HepG2 (cell line): ENCODE measurements at regions of chr3 and their contacts with region 1.

Region 1: GRCh38 chr3:49339945-49340800 is at the start of gene USP4:
- DNase-seq: peak; percentile 89
- ATAC-seq: peak; percentile 92
- H3K4me3 ChIP-seq: peak within 1 kb of the TSS; percentile 76 to 90 (median 82)
- H3K27ac ChIP-seq: peak within 1 kb of the TSS; percentile 93
- H3K4me1 ChIP-seq: peaks cover 44% of the 10 kb centered on the region
- H3K27me3 ChIP-seq: no peaks in the 10 kb centered on the region
- CTCF ChIP-seq: peak; percentile 84
- EP300 ChIP-seq: peak in 1 of 2 experiments; percentile 16; a peak in 1 of 4 replicates
- POLR2A ChIP-seq: peak; percentile 63 to 78
- RAD21 ChIP-seq: peak; percentile 79
- total RNA-seq, gene USP4: 9.2 and 12.1 TPM in 2 replicates

Region 2: DNA sequence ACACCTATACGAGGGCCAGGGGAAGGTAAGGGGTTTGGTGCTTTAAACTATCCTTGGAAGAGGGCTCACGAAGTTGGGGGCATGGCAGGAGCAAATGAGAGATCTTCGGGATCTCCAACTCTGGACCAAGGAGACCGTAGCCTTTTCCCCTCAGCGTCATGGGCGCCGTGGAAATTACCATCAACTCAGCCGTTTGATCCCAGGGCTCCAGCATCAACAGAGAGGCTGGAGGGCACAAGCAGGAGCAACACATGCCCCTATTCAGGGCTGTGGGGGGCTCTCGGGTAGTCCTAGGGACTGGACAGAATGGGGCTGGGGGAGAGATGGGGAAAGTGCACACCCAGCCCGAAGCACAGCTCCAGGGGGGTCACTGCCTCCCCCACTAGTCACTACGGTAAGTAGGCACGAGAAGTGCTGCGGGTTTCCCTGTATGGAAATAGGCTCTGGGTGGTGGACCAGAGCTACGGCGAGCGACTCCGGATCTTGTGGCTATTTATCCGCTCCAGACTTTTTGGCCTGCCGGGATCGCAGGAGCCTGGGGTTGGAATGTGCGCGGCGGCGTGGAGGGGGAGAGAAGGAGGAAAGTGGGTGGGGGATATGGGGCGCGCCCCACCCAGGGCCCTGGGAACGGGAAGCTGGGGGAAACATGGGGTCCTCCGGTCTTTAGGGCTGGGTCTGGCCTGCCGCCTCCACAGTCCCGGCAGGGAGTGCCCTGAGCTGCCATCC is 206.8 kb before region 1 on chr3:
- CTCF ChIA-PET with region 1: no interaction called
- POLR2A ChIA-PET with region 1: interaction called, 12 read pairs
- in situ Hi-C with region 1: no loop called
- intact Hi-C with region 1: no loop called
- DNase-seq: peak; percentile 80
- ATAC-seq: peak; percentile 60
- H3K4me3 ChIP-seq: peak overlapping the region; percentile 72 to 78 (median 77)
- H3K27ac ChIP-seq: peak overlapping the region; percentile 80
- H3K4me1 ChIP-seq: peaks cover 39% of the 10 kb centered on the region
- H3K27me3 ChIP-seq: no peaks in the 10 kb centered on the region
- CTCF ChIP-seq: peak; percentile 35
- EP300 ChIP-seq: no peak
- POLR2A ChIP-seq: peak in 1 of 2 experiments; percentile 31; a peak in 1 of 4 replicates
- RAD21 ChIP-seq: 0 out of 2 replicates have a peak, but pooled peaks have one; percentile 18

Region 3: DNA sequence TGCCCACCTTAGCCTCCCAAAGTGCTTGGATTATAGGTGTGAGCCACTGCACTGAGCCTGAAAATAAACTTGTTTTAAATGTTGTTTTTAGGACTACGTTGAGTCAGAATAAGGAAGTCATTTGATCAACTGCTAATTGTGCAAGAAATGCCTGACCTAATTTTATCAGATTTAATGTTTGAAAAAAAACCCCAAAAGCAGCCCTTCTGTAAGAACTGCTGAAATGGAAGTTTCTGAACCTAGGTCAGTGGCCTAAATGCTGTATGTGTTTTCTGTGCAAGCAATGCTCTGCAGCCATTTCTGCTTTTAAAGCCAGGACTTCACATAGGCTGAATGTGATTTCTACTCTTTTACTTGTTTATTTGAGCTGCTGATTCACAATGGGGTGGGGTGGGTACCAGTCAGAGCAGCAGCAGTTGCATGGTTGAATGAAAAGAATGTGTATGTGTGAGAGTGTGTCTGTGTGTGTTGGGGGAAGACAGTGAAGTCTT is 11.4 kb after region 1 on chr3:
- CTCF ChIA-PET with region 1: interaction called, 3 read pairs
- POLR2A ChIA-PET with region 1: interaction called, 134 read pairs
- in situ Hi-C with region 1: no loop called
- intact Hi-C with region 1: no loop called
- DNase-seq: no peak
- ATAC-seq: peak; percentile 19
- H3K4me3 ChIP-seq: peak overlapping the region in 2 of 3 experiments; percentile 27 to 32; a peak in 5 of 6 replicates
- H3K27ac ChIP-seq: peak overlapping the region; percentile 56
- H3K4me1 ChIP-seq: peaks cover 67% of the 10 kb centered on the region
- H3K27me3 ChIP-seq: no peaks in the 10 kb centered on the region
- CTCF ChIP-seq: no peak
- EP300 ChIP-seq: no peak
- POLR2A ChIP-seq: no peak
- RAD21 ChIP-seq: no peak

Region 4: GRCh38 chr3:49411968-49412631 is 71.9 kb after region 1 on chr3 and contains the starts of genes RHOA and TCTA:
- CTCF ChIA-PET with region 1: no interaction called
- POLR2A ChIA-PET with region 1: interaction called, 38 read pairs
- in situ Hi-C with region 1: no loop called
- intact Hi-C with region 1: loop called (anchors 1 kb)
- DNase-seq: peak; percentile 99
- ATAC-seq: peak; percentile 90
- H3K4me3 ChIP-seq: peak within 1 kb of the TSS; percentile 81 to 93 (median 90)
- H3K27ac ChIP-seq: peak within 1 kb of the TSS; percentile 91
- H3K4me1 ChIP-seq: peaks cover 47% of the 10 kb centered on the region
- H3K27me3 ChIP-seq: no peaks in the 10 kb centered on the region; a peak in 1 of 5 replicates
- CTCF ChIP-seq: peak; percentile 32; the same call in 1 of the 2 replicates
- EP300 ChIP-seq: no peak; a peak in 1 of 4 replicates
- POLR2A ChIP-seq: peak; percentile 96 to 99
- RAD21 ChIP-seq: peak; percentile 30; the same call in 1 of the 2 replicates
- total RNA-seq, gene RHOA: 177 and 258 TPM in 2 replicates
- total RNA-seq, gene TCTA: 6.7 and 8.3 TPM in 2 replicates

Region 5: GRCh38 chr3:49428697-49429100 is 88.5 kb after region 1 on chr3:
- CTCF ChIA-PET with region 1: no interaction called
- POLR2A ChIA-PET with region 1: interaction called, 32 read pairs
- in situ Hi-C with region 1: loop called (anchors 25 kb)
- intact Hi-C with region 1: no loop called
- DNase-seq: no peak
- ATAC-seq: peak; percentile 24
- H3K4me3 ChIP-seq: peak overlapping the region; percentile 72 to 89 (median 87)
- H3K27ac ChIP-seq: peak overlapping the region; percentile 90
- H3K4me1 ChIP-seq: peaks cover 43% of the 10 kb centered on the region
- H3K27me3 ChIP-seq: no peaks in the 10 kb centered on the region; a peak in 2 of 5 replicates
- CTCF ChIP-seq: peak; percentile 10
- EP300 ChIP-seq: no peak
- POLR2A ChIP-seq: no peak
- RAD21 ChIP-seq: no peak